K562 (cell line): ENCODE measurements at regions of chr7 and their contacts with region 1.

Region 1: DNA sequence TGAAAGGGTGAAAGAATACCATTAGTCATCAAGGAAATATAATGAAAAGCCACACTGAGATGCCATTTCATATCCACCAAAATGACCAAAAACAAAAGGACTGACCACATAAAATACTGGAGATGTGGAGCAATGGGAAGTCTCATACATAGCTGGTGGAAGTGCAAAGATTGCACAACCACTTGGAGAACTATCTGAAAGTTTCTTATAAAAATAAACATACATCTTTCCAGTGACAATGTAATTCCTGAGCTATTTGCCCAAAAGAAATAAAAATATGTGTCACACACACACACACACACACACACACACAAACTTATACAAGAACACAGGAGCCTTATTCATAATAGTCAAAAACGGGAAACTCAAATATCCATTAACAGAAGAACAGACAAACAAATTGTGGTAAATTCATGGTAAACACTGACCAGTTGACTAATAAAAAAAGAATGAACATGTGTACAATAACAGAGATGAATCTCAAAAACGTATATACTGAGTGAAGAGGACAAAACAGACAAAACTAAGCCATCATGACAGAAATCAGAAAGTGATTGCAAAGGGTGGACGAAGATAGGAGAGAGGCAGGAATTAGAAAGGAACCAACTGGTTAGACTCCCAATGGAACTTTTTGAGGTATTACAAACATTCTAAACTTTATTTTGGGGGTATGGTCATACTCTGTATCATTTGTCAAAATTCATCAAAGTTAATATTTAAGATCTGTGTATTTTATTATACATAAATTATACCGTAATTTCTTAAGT is 21.5 kb downstream of the WASL start:
- DNase-seq: no peak
- ATAC-seq: peak; percentile 57
- H3K4me3 ChIP-seq: 0 out of 2 replicates have a peak overlapping the region, but pooled peaks have one; percentile 1
- H3K27ac ChIP-seq: peak overlapping the region; percentile 57
- H3K4me1 ChIP-seq: peaks cover 9 to 13% of the 10 kb centered on the region in 2 experiments; a peak in 4 of 5 replicates
- H3K27me3 ChIP-seq: no peaks in the 10 kb centered on the region
- CTCF ChIP-seq: no peak
- EP300 ChIP-seq: no peak
- POLR2A ChIP-seq: no peak
- RAD21 ChIP-seq: no peak

Region 2: DNA sequence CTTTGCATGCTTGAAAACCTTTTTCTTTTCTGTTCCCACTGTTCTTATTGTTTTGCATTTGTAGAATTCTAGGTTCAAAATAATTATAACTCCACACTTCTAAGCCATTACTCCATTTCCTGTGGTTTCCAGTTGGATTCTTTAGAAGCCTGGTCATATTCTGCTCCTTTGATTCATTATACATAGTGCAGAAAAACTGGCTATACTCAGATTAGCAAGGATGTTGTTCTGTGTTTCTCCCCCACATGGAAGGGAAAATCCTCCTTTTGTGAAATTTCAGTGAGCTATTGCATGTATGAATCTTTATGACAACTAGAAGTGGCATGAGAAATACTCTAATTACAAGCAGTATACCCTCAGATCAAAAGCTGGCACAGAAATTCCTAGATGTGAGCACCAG is 607.0 kb before region 1 on chr7:
- CTCF ChIA-PET with region 1: no interaction called
- POLR2A ChIA-PET with region 1: no interaction called
- in situ Hi-C with region 1: no loop called
- intact Hi-C with region 1: no loop called
- DNase-seq: no peak
- ATAC-seq: no peak
- H3K4me3 ChIP-seq: no peak overlapping the region
- H3K27ac ChIP-seq: no peak overlapping the region
- H3K4me1 ChIP-seq: no peaks in the 10 kb centered on the region
- H3K27me3 ChIP-seq: no peaks in the 10 kb centered on the region
- CTCF ChIP-seq: no peak
- EP300 ChIP-seq: no peak
- POLR2A ChIP-seq: no peak
- RAD21 ChIP-seq: no peak

Region 3: GRCh38 chr7:123712619-123713018 is 14.6 kb before region 1 on chr7:
- CTCF ChIA-PET with region 1: no interaction called
- POLR2A ChIA-PET with region 1: interaction called, 11 read pairs
- in situ Hi-C with region 1: no loop called
- intact Hi-C with region 1: no loop called
- DNase-seq: no peak
- ATAC-seq: peak; percentile 43
- H3K4me3 ChIP-seq: no peak overlapping the region
- H3K27ac ChIP-seq: peak overlapping the region; percentile 13; the same call in 2 of the 3 replicates
- H3K4me1 ChIP-seq: peaks cover 0 to 54% of the 10 kb centered on the region in 2 experiments; a peak in 4 of 5 replicates
- H3K27me3 ChIP-seq: no peaks in the 10 kb centered on the region
- CTCF ChIP-seq: no peak
- EP300 ChIP-seq: no peak
- POLR2A ChIP-seq: no peak
- RAD21 ChIP-seq: no peak

Region 4: GRCh38 chr7:125568799-125569198 is 1841.5 kb after region 1 on chr7:
- CTCF ChIA-PET with region 1: no interaction called
- POLR2A ChIA-PET with region 1: no interaction called
- in situ Hi-C with region 1: no loop called
- intact Hi-C with region 1: loop called (anchors 5 kb)
- DNase-seq: peak in 1 of 4 experiments; percentile 23
- ATAC-seq: peak; percentile 43
- H3K4me3 ChIP-seq: no peak overlapping the region
- H3K27ac ChIP-seq: peak overlapping the region; percentile 11; the same call in 1 of the 3 replicates
- H3K4me1 ChIP-seq: no peaks in the 10 kb centered on the region
- H3K27me3 ChIP-seq: no peaks in the 10 kb centered on the region
- CTCF ChIP-seq: no peak
- EP300 ChIP-seq: no peak
- POLR2A ChIP-seq: no peak
- RAD21 ChIP-seq: no peak